ENCODE measurements at regions of chr2 and their contacts with region 1.

Region 1: GRCh38 chr2:29923110-29923721 is 1.8 kb upstream of the ALK start:
- DNase-seq: peak; percentile 46
- H3K4me3 ChIP-seq: no peak overlapping the region
- H3K27ac ChIP-seq: no peak overlapping the region
- H3K4me1 ChIP-seq: peaks cover 0 to 22% (median 14%) of the 10 kb centered on the region in 4 donors
- H3K27me3 ChIP-seq: peaks cover 55% of the 10 kb centered on the region
- CTCF ChIP-seq: peak; percentile 69 to 95 (median 86)
- EP300 ChIP-seq: no peak
- POLR2A ChIP-seq: no peak

Region 2: GRCh38 chr2:30022444-30023071 is 99.3 kb after region 1 on chr2:
- in situ Hi-C with region 1: no loop called
- intact Hi-C with region 1: no loop called
- DNase-seq: no peak
- H3K4me3 ChIP-seq: no peak overlapping the region
- H3K27ac ChIP-seq: no peak overlapping the region
- H3K4me1 ChIP-seq: no peaks in the 10 kb centered on the region
- H3K27me3 ChIP-seq: peaks cover 7% of the 10 kb centered on the region
- CTCF ChIP-seq: no peak
- EP300 ChIP-seq: no peak
- POLR2A ChIP-seq: no peak

Region 3: GRCh38 chr2:30072250-30072842 is 149.1 kb after region 1 on chr2:
- in situ Hi-C with region 1: no loop called
- intact Hi-C with region 1: loop called (anchors 10 kb)
- DNase-seq: peak; percentile 63
- H3K4me3 ChIP-seq: no peak overlapping the region
- H3K27ac ChIP-seq: no peak overlapping the region
- H3K4me1 ChIP-seq: no peaks in the 10 kb centered on the region
- H3K27me3 ChIP-seq: peaks cover 13% of the 10 kb centered on the region
- CTCF ChIP-seq: peak; percentile 54 to 64 (median 61)
- EP300 ChIP-seq: no peak
- POLR2A ChIP-seq: no peak